H1 (cell line): ENCODE measurements at regions of chr9 and their contacts with region 1.

Region 1: DNA sequence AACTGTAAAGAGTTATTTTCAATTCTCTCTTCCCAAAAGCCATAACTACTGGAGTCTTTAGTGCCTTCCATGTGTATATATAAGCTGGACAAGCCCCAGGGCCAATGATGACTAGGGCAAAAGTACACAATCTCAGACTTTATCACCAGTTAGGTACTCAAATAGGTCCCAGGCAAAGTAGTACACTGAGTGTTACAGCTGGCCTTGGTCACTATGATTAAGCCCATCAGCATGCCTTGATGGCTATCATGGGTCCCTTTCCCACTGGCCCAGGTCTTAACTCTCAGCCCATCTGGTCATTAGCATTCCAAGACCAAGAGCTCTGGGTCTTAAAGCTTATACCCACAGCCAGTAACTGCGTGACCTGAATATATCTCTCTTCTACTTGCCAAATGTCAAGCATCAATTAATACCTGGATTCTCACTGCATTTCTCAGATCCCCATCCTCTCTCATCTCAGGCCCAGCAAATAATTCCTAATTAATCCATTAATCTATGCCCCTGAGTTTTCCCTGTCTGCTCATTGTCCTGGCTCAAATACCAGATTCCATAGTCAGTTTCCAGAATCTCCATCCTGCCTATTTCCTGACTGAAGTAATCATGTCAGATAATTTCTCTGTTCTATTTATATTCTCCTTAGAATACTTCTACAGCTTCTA is 62.3 kb downstream of the NR6A1 start:
- DNase-seq: no peak
- H3K4me3 ChIP-seq: no peak overlapping the region
- H3K27ac ChIP-seq: no peak overlapping the region
- H3K4me1 ChIP-seq: peaks cover 2 to 16% (median 7%) of the 10 kb centered on the region in 4 experiments; a peak in 5 of 7 replicates
- H3K27me3 ChIP-seq: no peaks in the 10 kb centered on the region
- CTCF ChIP-seq: no peak
- EP300 ChIP-seq: no peak
- POLR2A ChIP-seq: no peak
- RAD21 ChIP-seq: no peak

Region 2: DNA sequence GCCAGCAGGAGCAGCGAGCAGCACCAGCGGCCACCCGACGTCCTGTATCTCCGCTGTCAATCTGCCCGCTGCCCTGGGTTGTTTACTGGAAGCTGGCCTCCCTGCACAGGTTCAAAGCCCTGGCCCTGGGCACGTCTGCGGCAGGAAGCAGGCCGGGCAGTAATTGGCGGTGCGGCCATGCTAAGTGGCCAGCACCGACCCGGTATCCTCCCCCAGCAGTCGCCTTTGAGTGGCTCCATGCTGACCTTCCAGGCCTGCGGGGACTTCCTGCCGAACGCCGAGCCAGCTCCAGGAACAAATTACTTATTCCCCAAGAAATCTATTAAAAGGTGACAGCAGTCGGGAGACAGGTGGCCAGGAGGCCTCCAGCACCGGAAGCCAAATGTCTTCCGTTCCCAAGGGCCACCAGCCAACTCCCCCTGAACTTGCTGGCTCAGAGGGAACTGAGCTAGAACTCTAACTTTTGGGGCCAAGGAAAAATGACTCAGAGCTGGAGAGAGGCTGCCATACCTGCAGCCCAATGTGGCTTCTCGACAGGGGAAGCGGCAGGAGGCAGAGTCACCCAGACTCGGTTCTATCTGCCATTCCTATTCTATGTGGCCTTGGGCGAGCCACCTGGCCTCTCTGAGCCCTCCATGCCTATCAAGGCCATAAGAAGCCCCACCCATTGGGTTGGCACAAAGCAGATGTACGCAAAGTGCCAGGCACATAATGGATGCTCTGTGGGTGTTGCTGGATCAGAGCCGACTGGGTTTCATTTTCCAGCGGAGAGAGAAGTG is 279.8 kb before region 1 on chr9:
- CTCF ChIA-PET with region 1: no interaction called
- POLR2A ChIA-PET with region 1: no interaction called
- DNase-seq: no peak
- H3K4me3 ChIP-seq: no peak overlapping the region
- H3K27ac ChIP-seq: no peak overlapping the region
- H3K4me1 ChIP-seq: no peaks in the 10 kb centered on the region
- H3K27me3 ChIP-seq: no peaks in the 10 kb centered on the region; a peak in 1 of 7 replicates
- CTCF ChIP-seq: no peak
- EP300 ChIP-seq: no peak
- POLR2A ChIP-seq: no peak
- RAD21 ChIP-seq: no peak

Region 3: DNA sequence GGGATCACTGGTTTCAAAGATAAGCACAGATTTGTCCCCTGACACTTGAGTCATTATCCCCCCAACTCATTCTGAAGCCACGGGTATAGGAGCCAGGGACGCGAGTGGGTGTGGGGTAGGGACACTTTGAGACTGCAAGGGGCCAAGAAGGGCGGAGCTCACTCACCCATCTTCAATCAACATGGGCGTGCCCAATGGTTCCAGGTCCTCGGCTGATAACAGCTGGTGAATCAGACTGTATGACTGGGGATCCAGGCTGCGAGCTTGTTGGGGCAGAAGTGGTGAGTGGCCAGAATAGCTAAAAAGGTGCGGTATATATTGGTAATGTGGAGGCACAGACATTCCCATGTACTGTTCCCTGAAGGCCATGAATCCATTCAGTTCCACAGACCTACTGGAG is 170.8 kb before region 1 on chr9:
- CTCF ChIA-PET with region 1: interaction called, 22 read pairs
- POLR2A ChIA-PET with region 1: no interaction called
- DNase-seq: no peak
- H3K4me3 ChIP-seq: no peak overlapping the region
- H3K27ac ChIP-seq: no peak overlapping the region
- H3K4me1 ChIP-seq: no peaks in the 10 kb centered on the region
- H3K27me3 ChIP-seq: no peaks in the 10 kb centered on the region
- CTCF ChIP-seq: no peak
- EP300 ChIP-seq: no peak
- POLR2A ChIP-seq: no peak
- RAD21 ChIP-seq: no peak

Region 4: DNA sequence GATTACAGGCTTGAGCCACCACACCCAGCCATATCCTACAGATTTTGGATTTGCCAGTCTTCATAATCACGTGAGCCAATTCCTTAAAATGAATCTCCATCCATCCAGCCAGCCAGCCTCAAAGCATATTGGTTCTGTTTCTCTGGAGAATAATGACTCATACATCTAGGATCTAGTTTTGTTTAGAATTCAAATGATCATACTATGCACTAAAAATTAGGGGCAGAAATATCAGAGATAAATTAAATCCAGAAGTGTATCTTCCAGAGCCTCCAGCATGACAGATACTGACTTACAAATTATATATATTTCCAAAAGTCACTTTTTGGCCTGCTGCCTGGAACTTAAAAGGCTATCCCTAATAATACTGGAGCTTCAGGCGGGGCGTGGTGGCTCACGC is 82.5 kb before region 1 on chr9:
- CTCF ChIA-PET with region 1: interaction called, 25 read pairs
- POLR2A ChIA-PET with region 1: no interaction called
- DNase-seq: no peak
- H3K4me3 ChIP-seq: no peak overlapping the region
- H3K27ac ChIP-seq: no peak overlapping the region
- H3K4me1 ChIP-seq: peaks cover 0 to 4% (median 0%) of the 10 kb centered on the region in 4 experiments; a peak in 2 of 7 replicates
- H3K27me3 ChIP-seq: no peaks in the 10 kb centered on the region
- CTCF ChIP-seq: no peak
- EP300 ChIP-seq: no peak
- POLR2A ChIP-seq: no peak
- RAD21 ChIP-seq: no peak

Region 5: GRCh38 chr9:124660341-124660801 is 48.4 kb before region 1 on chr9:
- CTCF ChIA-PET with region 1: interaction called, 14 read pairs
- POLR2A ChIA-PET with region 1: no interaction called
- DNase-seq: no peak
- H3K4me3 ChIP-seq: peak overlapping the region; percentile 11 to 48 (median 21); a peak in 4 of 8 replicates
- H3K27ac ChIP-seq: peak overlapping the region; percentile 50
- H3K4me1 ChIP-seq: peaks cover 0 to 11% (median 7%) of the 10 kb centered on the region in 4 experiments; a peak in 4 of 7 replicates
- H3K27me3 ChIP-seq: no peaks in the 10 kb centered on the region
- CTCF ChIP-seq: no peak
- EP300 ChIP-seq: no peak
- POLR2A ChIP-seq: no peak
- RAD21 ChIP-seq: no peak

Region 6: DNA sequence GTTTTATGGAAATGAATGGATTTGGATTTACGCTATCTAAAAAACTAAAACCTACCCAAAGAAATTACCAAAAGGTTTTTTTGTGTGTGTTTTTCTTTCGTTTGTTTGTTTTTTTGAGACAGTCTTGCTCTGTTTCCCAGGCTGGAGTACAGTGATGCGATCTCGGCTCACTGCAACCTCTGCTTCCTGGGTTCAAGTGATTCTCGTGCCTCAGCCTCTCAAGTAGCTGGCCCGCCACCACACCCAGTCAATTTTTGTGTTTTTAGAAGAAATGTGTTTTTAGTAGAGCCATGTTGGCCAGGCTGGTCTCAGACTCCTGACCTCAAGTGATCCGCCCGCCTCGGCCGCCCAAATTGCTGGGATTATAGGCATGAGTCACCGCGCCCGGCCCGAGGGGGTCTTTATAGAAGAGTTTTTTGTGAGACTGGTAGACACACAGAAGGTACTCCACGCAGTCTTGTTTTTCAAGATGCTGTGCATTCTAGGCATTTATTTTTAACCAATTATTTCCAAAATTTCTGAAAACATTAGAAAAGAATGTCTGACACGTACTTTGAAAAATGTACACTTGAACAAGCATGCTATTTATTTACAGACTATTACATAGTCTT is 13.4 kb before region 1 on chr9:
- CTCF ChIA-PET with region 1: interaction called, 17 read pairs
- POLR2A ChIA-PET with region 1: interaction called, 5 read pairs
- DNase-seq: no peak
- H3K4me3 ChIP-seq: no peak overlapping the region
- H3K27ac ChIP-seq: no peak overlapping the region
- H3K4me1 ChIP-seq: peaks cover 9 to 17% (median 14%) of the 10 kb centered on the region in 4 experiments; a peak in 6 of 7 replicates
- H3K27me3 ChIP-seq: no peaks in the 10 kb centered on the region
- CTCF ChIP-seq: no peak
- EP300 ChIP-seq: no peak
- POLR2A ChIP-seq: no peak
- RAD21 ChIP-seq: no peak

Region 7: GRCh38 chr9:124743686-124744348 is 35.1 kb after region 1 on chr9:
- CTCF ChIA-PET with region 1: interaction called, 24 read pairs
- POLR2A ChIA-PET with region 1: no interaction called
- DNase-seq: no peak
- H3K4me3 ChIP-seq: no peak overlapping the region
- H3K27ac ChIP-seq: no peak overlapping the region
- H3K4me1 ChIP-seq: peaks cover 0 to 5% (median 0%) of the 10 kb centered on the region in 4 experiments; a peak in 2 of 7 replicates
- H3K27me3 ChIP-seq: no peaks in the 10 kb centered on the region
- CTCF ChIP-seq: no peak
- EP300 ChIP-seq: no peak
- POLR2A ChIP-seq: no peak
- RAD21 ChIP-seq: no peak

Region 8: DNA sequence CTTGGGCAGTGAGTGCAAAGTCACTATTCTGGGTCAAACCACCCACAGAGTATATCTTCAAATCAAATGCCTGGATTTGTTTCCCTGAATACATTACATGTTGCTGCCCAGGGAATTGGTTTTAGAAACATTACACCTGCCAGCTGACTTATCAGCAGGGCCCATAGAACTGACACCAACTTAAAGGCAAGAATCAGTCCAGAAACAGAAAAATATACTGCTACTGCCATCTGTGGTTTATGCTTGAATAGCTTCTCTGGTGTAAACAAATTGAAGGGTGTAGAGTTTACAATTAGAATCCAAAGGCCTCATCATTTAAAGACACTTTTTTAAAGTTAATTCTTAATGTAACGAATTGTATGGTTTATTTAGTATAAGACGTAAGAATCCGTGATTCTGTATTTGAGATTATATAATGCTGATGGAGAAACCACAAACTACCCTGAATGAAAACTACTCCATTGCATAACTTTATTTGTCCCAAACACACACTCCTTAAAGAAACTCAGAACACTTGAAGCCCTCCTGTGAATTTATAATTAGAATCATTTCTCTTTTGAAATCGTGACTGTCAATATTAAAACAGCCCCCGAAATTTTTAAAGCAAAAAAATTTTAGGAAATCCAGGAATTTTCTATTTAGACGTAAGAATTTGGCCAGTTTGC is 56.1 kb after region 1 on chr9:
- CTCF ChIA-PET with region 1: interaction called, 34 read pairs
- POLR2A ChIA-PET with region 1: interaction called, 3 read pairs
- DNase-seq: no peak
- H3K4me3 ChIP-seq: peak overlapping the region in 1 of 4 experiments; percentile 86; a peak in 2 of 8 replicates
- H3K27ac ChIP-seq: no peak overlapping the region
- H3K4me1 ChIP-seq: peaks cover 4 to 40% (median 20%) of the 10 kb centered on the region in 4 experiments; a peak in 6 of 7 replicates
- H3K27me3 ChIP-seq: no peaks in the 10 kb centered on the region
- CTCF ChIP-seq: peak in 2 of 3 experiments; percentile 23 to 44; a peak in 2 of 4 replicates
- EP300 ChIP-seq: no peak
- POLR2A ChIP-seq: no peak
- RAD21 ChIP-seq: peak; percentile 40 to 51